ENCODE measurements at regions of chr17 and their contacts with region 1.

Region 1: DNA sequence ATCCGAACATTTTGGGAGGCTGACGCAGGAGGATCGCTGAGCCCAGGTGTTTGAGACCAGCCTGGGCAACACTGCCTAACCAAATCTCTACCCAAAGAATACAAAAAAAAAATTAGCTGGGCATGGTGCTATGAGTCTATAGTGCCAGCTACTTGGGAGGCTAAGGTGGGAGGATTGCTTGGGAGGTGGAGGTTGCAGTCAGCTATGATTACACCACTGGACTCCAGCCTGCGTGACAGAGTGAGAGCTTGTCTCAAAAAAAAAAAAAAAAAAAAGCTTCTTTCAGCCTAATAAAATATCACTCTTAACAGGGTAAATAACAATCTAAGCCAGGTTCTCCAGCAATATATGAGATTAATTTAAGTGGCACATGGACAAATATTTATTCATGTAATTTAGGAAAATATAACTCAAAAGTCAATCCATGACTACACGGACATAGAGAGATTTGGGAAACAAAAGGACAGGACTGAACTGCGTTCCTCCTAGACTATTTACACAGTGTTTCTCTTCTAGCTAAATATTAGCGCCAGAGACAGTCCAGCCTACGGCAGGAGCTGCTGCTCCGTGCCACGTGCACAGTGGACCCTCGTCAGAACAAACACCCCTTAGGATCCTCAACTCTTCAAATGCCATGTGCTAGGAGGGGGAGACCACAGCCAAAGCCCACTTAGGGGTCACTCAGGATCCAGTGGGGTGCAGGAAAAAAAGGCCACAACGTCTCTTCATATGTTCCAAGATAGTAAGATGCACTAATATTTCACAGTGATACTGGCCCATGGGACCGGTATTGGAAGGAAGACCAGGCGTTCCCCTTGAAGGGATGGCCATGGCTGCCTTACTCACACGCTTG is 8.7 kb downstream of the USP36 start:
- DNase-seq: no peak
- ATAC-seq: no peak

Region 2: GRCh38 chr17:78815696-78816095 is 16.2 kb before region 1 on chr17:
- intact Hi-C with region 1: loop called (anchors 2 kb)
- DNase-seq: no peak
- ATAC-seq: no peak